ENCODE measurements at regions of chr19 and their contacts with region 1.

Region 1: DNA sequence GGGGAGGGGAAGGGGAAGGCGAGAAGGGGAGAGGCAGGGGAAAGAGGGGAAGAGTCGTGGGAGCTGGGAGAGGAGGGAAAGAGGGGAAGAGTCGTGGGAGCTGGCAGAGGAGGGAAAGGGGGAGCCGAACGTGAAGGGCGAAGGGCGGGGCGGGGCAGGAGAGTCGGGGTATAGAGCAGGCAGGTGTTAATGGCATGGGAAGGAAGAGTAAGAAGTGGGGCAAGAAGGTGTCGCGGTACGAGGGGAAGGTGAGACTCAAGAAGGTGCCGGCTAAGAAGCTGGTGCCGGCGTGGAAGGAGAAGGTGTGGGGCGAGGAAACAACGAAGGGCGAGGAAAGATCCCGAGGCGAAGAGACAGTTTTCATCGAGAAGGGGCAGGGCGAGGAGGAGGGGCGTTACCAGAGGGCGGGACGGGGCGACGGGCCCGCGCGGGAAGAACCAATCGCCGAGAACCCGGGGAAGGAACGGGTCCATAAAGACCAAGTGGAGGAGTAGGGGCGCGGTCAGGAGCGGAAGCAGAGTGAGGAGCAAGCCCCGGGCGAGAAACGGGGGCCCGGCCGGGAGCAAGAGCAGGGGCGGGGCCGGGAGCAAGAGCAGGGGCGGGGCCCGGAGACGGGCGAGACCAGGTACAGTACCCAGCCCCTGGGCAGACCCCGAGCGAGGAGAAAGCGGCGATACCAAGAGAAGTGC is 463 bp downstream of the CATSPERG start:
- DNase-seq: peak; percentile 95 to 97 (median 97)
- H3K4me3 ChIP-seq: peak overlapping the region; percentile 61 to 93 (median 81)
- H3K27ac ChIP-seq: peak overlapping the region in 1 of 2 experiments; percentile 75
- H3K4me1 ChIP-seq: peaks cover 0 to 15% (median 9%) of the 10 kb centered on the region in 4 experiments
- H3K27me3 ChIP-seq: no peaks in the 10 kb centered on the region

Region 2: DNA sequence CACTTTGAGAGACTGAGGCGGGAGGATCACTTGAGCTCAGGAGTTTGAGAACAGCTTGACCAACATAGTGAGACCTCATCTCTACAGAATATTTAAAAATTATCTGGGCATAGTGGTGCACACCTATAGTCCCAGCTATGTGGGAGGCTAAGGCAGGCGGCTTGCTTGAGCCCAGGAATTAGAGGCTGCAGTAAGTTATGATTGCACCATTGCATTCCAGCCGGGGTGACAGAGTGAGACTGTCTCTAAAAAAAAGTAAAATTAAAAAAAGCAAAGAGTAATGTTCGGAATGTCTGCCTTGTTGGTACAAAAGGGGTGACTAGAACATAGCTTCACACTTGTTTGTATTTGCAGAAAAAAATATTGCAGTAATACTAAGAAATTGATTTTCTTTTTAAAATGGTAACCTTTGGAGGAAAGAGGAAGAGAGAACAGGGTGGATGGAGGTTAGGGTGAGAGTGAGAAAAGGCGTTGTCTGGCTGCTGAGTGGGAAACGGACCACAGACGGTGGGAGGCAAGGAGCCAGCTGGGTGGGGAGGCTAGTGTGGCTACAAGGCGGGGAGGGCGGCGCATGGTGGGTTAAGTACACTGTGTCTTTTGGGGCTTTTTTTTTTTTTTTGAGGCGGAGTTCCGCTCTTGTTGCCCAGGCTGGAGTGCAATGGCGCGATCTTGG is 90.1 kb before region 1 on chr19:
- CTCF ChIA-PET with region 1: interaction called, 62 read pairs
- POLR2A ChIA-PET with region 1: no interaction called
- DNase-seq: no peak
- H3K4me3 ChIP-seq: no peak overlapping the region
- H3K27ac ChIP-seq: no peak overlapping the region
- H3K4me1 ChIP-seq: peaks cover 0 to 6% (median 2%) of the 10 kb centered on the region in 4 experiments
- H3K27me3 ChIP-seq: no peaks in the 10 kb centered on the region

Region 3: DNA sequence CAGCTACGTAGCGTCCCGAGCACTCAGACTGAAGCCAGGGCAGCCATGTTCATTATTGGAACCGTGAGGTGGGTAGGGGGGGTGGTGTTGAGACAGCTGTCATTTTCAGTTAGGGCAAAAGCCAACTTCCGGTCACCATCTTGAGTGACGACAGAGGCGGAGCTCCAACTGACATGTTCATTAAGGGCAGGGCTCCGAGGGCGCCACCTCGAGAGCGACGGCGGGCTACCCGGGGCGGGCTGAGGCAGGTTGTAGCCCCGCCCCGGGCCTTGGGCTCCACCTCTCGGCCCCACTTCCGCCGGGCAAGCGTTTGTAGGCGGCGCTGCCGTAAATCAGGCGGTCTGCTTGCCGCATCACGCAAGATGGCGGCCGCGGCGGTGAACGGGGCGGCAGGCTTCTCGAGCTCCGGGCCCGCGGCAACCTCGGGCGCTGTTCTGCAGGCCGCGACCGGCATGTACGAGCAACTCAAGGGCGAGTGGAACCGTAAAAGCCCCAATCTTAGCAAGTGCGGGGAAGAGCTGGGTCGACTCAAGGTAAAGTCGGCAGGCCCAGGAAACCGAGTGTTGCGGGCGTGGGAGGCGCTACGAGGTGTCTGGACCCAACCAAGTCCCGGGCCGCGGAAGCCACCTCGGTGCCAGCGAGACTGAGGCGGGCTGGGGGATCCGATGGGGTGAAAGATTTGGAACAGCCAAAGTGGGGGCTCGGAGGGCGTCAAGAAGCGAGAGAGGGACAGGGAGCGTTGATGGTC is 38.5 kb after region 1 on chr19 and contains the start of gene PSMD8:
- CTCF ChIA-PET with region 1: interaction called, 5 read pairs
- POLR2A ChIA-PET with region 1: interaction called, 13 read pairs
- DNase-seq: peak; percentile 99 to 100 (median 100)
- H3K4me3 ChIP-seq: peak within 1 kb of the TSS; percentile 63 to 97 (median 92)
- H3K27ac ChIP-seq: peak within 1 kb of the TSS; percentile 75 to 95
- H3K4me1 ChIP-seq: peaks cover 15 to 23% (median 20%) of the 10 kb centered on the region in 4 experiments
- H3K27me3 ChIP-seq: peaks cover 0 to 3% (median 0%) of the 10 kb centered on the region in 5 experiments

Measured in common myeloid progenitor, CD34-positive (primary cell).